Left colon (tissue), 2 donors: ENCODE measurements at regions of chr10 and their contacts with region 1.

Region 1: DNA sequence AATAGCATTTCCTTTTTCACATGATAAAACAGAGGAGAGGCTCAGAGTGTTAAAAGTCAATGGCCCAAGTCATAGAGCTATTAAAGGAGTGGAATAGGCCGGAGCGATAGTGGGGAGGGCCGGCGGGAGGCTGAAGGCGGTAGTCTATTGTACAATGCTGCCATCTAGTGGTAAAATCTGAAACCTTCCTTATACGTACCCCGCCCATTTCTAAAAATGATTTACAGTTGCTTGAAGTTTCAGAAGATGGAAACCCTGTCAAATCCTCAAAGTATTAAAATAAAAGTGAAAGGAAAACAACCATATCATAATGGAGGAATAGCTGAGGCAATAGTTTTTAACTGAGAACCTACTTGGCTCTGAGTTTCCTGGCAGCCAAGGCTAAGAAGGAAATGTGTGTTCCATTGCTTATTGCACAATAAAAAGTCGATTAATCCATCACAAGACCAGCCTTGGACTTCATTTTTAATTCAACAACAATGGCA is 209.1 kb downstream of the CCSER2 start:
- DNase-seq: peak in 1 of 2 donors; percentile 59
- ATAC-seq: peak; percentile 91

Region 2: GRCh38 chr10:84264611-84265141 is 272.8 kb before region 1 on chr10:
- intact Hi-C with region 1: loop called in 1 of 2 experiments (anchors 2 kb)
- DNase-seq: peak; percentile 39 to 76
- ATAC-seq: peak; percentile 86

Region 3: DNA sequence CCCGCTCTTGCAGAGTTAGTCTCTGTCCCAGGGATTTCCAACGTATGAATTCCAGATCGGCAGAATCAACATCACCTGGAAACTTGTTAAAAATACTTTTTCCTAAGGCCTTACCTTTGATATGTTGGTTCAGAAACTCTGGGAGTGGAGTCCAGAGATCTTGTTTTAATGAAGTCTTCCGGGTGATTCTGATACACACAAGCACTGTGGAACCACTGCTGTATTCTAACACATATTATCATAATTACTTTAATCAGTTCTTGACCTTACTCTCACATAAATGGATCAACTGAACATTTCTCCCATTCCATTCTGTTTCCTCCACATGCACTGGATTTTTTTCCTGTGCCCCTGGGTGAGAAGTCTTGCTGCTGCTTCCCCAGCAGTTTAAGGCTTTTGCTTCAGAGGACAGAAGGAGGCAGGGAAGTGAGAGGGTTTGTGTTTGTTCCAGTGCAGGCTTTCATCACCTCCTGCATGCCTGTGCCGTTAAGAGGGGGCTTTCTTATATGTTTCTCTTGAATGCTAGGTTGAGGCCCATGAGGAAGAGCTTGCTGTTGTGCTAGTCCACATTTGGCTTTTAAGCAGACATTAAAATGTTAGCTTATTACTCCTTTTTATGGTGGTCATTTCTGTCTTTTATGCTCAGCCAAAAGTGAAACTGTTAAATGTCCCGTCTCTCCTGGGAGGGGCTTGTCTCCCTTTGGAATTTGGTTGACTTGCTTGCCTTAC is 176.7 kb before region 1 on chr10:
- intact Hi-C with region 1: no loop called
- DNase-seq: no peak
- ATAC-seq: peak; percentile 79

Region 4: GRCh38 chr10:84375011-84375410 is 162.5 kb before region 1 on chr10:
- intact Hi-C with region 1: loop called in 1 of 2 experiments (anchors 2 kb)
- DNase-seq: no peak
- ATAC-seq: peak; percentile 66